PC-9 (cell line): ENCODE measurements at regions of chr9 and their contacts with region 1.

Region 1: GRCh38 chr9:108813951-108814601 is 41.7 kb downstream of the ACTL7B start:
- DNase-seq: peak; percentile 73 to 90
- H3K4me3 ChIP-seq: no peak overlapping the region
- H3K27ac ChIP-seq: 0 out of 2 replicates have a peak overlapping the region, but pooled peaks have one; percentile 35
- H3K4me1 ChIP-seq: peaks cover 20% of the 10 kb centered on the region
- H3K27me3 ChIP-seq: no peaks in the 10 kb centered on the region
- CTCF ChIP-seq: peak; percentile 87

Region 2: GRCh38 chr9:107465467-107466451 is 1348.3 kb before region 1 on chr9:
- CTCF ChIA-PET with region 1: no interaction called
- POLR2A ChIA-PET with region 1: no interaction called
- intact Hi-C with region 1: loop called (anchors 5 kb)
- DNase-seq: peak in 1 of 2 experiments; percentile 59
- H3K4me3 ChIP-seq: no peak overlapping the region
- H3K27ac ChIP-seq: no peak overlapping the region
- H3K4me1 ChIP-seq: peaks cover 5% of the 10 kb centered on the region; the same call in 1 of the 2 replicates
- H3K27me3 ChIP-seq: no peaks in the 10 kb centered on the region
- CTCF ChIP-seq: no peak

Region 3: GRCh38 chr9:107484117-107484723 is 1329.9 kb before region 1 on chr9:
- CTCF ChIA-PET with region 1: interaction called, 4 read pairs
- POLR2A ChIA-PET with region 1: no interaction called
- intact Hi-C with region 1: loop called (anchors 2 kb)
- DNase-seq: peak; percentile 42 to 65
- H3K4me3 ChIP-seq: peak overlapping the region; percentile 100; the same call in 1 of the 2 replicates
- H3K27ac ChIP-seq: 0 out of 2 replicates have a peak overlapping the region, but pooled peaks have one; percentile 50
- H3K4me1 ChIP-seq: peaks cover 45% of the 10 kb centered on the region
- H3K27me3 ChIP-seq: no peaks in the 10 kb centered on the region
- CTCF ChIP-seq: peak; percentile 72

Region 4: DNA sequence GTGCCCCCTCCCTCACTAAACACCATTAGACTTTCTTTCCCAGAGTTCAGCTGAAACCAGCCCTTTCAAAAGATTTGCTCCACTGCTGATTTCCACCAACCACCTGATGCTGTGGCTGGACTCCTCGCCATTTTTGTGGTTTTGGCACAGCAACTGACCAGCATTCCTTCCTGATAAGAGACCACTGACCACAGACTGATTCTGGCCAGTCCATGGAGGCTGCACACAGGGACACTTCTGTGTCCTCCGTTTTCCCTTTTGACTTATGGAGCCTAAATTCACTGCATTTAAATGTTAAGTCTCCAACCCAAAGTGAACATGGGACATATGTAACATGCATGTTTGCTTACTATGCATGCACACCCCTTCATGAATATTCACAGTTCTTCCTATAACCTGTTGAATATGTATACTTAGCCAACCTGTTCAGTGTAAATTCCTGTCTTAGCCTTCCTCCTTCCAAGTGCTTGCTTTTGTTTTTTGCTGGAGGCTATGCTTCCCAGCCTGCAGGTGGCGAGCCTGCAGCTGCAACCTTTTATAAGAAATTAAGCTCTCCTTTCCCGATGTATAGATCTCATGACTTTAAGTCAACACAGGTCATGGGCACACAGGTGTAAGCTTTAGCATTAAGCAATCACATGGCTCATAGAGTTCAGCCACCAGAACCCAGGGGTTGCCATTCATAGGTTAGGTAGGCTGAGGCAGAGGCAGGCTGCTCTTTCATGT is 37.0 kb before region 1 on chr9:
- CTCF ChIA-PET with region 1: interaction called, 5 read pairs
- POLR2A ChIA-PET with region 1: no interaction called
- intact Hi-C with region 1: loop called (anchors 1 kb)
- DNase-seq: peak; percentile 81 to 83
- H3K4me3 ChIP-seq: no peak overlapping the region
- H3K27ac ChIP-seq: 0 out of 2 replicates have a peak overlapping the region, but pooled peaks have one; percentile 10
- H3K4me1 ChIP-seq: peaks cover 20% of the 10 kb centered on the region
- H3K27me3 ChIP-seq: peaks cover 14% of the 10 kb centered on the region; the same call in 1 of the 2 replicates
- CTCF ChIP-seq: peak; percentile 55; the same call in 1 of the 2 replicates